ENCODE measurements at regions of chr17 and their contacts with region 1.

Region 1: GRCh38 chr17:40564883-40565768 is at the start of gene CCR7:
- DNase-seq: peak; percentile 83 to 94 (median 85)
- H3K4me3 ChIP-seq: peak within 1 kb of the TSS; percentile 94 to 96
- H3K4me3 Mint-ChIP-seq: peak within 1 kb of the TSS; percentile 88 to 98 (median 96)
- H3K27ac ChIP-seq: peak within 1 kb of the TSS; percentile 94
- H3K27ac Mint-ChIP-seq: peak within 1 kb of the TSS; percentile 95 to 100 (median 99)
- H3K4me1 ChIP-seq: peaks cover 73% of the 10 kb centered on the region
- H3K4me1 Mint-ChIP-seq: peaks cover 38 to 83% (median 60%) of the 10 kb centered on the region in 4 donors
- H3K27me3 ChIP-seq: no peaks in the 10 kb centered on the region
- H3K27me3 Mint-ChIP-seq: no peaks in the 10 kb centered on the region
- total RNA-seq, gene CCR7: 268 to 269 TPM

Region 2: DNA sequence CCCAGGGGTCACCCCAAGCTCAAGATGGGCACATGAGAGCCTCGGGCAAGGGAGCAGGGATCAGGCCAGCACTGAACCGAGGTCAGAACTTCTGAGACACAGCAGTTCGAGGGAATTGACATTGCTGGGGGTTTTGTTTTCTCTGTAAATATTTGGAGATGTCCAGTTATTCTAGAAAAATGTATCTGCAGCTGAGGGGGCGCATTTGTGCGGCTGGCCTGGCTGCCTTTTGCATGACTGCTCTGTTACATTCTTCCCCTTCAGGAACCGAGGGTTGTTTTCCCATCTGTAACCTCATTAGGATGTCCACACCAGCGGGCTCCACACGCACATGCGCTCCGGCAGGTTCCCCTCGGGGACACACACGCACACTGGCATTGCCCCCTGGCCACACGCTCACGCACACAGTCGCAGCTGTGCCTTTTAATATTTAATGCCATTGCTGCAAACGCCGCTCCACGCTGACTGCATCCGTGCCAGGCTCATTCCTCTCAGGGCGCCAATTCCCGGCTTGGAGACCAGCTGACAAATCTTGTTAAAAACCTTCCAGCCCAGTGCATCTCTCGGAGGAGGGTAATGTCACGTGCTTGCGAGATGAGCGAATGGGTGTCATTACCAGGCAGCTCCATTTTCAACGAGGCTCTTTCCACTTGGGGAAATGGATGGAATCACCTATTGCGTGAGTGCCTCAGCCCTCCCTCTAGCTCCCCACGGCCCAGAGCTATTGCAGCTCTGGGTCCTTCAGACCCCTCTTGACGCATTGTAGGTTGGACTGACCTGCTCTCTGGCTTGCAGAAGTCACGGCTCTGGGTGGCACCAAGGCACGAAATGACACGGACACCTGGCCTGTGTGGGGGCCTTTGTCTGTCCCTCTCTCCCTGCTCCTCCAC is 13.0 kb before region 1 on chr17:
- CTCF ChIA-PET with region 1: interaction called, 101 read pairs
- POLR2A ChIA-PET with region 1: interaction called, 262 read pairs
- intact Hi-C with region 1: loop called (anchors 1 kb)
- DNase-seq: peak in 1 of 5 donors; percentile 25
- H3K4me3 ChIP-seq: no peak overlapping the region
- H3K4me3 Mint-ChIP-seq: peak overlapping the region in 5 of 8 donors; percentile 13 to 69 (median 27)
- H3K27ac ChIP-seq: no peak overlapping the region
- H3K27ac Mint-ChIP-seq: peak overlapping the region; percentile 60 to 96 (median 89)
- H3K4me1 ChIP-seq: peaks cover 99% of the 10 kb centered on the region
- H3K4me1 Mint-ChIP-seq: peaks cover 69 to 100% (median 86%) of the 10 kb centered on the region in 4 donors
- H3K27me3 ChIP-seq: no peaks in the 10 kb centered on the region
- H3K27me3 Mint-ChIP-seq: no peaks in the 10 kb centered on the region

Region 3: GRCh38 chr17:40576225-40576651 is 11.1 kb after region 1 on chr17:
- CTCF ChIA-PET with region 1: interaction called, 27 read pairs
- POLR2A ChIA-PET with region 1: interaction called, 166 read pairs
- intact Hi-C with region 1: loop called (anchors 1 kb)
- DNase-seq: peak in 1 of 5 donors; percentile 50
- H3K4me3 ChIP-seq: no peak overlapping the region
- H3K4me3 Mint-ChIP-seq: peak overlapping the region in 7 of 8 donors; percentile 1 to 74 (median 50)
- H3K27ac ChIP-seq: peak overlapping the region; percentile 13
- H3K27ac Mint-ChIP-seq: peak overlapping the region; percentile 76 to 90 (median 87)
- H3K4me1 ChIP-seq: peaks cover 53% of the 10 kb centered on the region
- H3K4me1 Mint-ChIP-seq: peaks cover 32 to 56% (median 49%) of the 10 kb centered on the region in 4 donors
- H3K27me3 ChIP-seq: no peaks in the 10 kb centered on the region
- H3K27me3 Mint-ChIP-seq: no peaks in the 10 kb centered on the region

Region 4: GRCh38 chr17:40588552-40588951 is 23.4 kb after region 1 on chr17:
- CTCF ChIA-PET with region 1: interaction called, 11 read pairs
- POLR2A ChIA-PET with region 1: interaction called, 166 read pairs
- intact Hi-C with region 1: no loop called
- DNase-seq: peak in 1 of 5 donors; percentile 35
- H3K4me3 ChIP-seq: peak overlapping the region in 1 of 2 donors; percentile 1
- H3K4me3 Mint-ChIP-seq: peak overlapping the region in 7 of 8 donors; percentile 36 to 86 (median 75)
- H3K27ac ChIP-seq: no peak overlapping the region
- H3K27ac Mint-ChIP-seq: peak overlapping the region in 6 of 7 donors; percentile 9 to 89 (median 77)
- H3K4me1 ChIP-seq: peaks cover 50% of the 10 kb centered on the region
- H3K4me1 Mint-ChIP-seq: peaks cover 45 to 71% (median 56%) of the 10 kb centered on the region in 4 donors
- H3K27me3 ChIP-seq: no peaks in the 10 kb centered on the region
- H3K27me3 Mint-ChIP-seq: no peaks in the 10 kb centered on the region

Measured in CD4-positive, alpha-beta memory T cell (primary cell).